Activated CD4-positive, alpha-beta T cell treated with anti-CD3 and anti-CD28 coated beads for 36 hours (primary cell): ENCODE measurements at regions of chr1 and their contacts with region 1.

Region 1: GRCh38 chr1:53485478-53486394 is 26.5 kb downstream of the DMRTB1 start:
- DNase-seq: peak; percentile 88
- ATAC-seq: peak; percentile 94
- H3K4me3 Mint-ChIP-seq: no peak overlapping the region
- H3K27ac Mint-ChIP-seq: no peak overlapping the region
- H3K4me1 Mint-ChIP-seq: peaks cover 3% of the 10 kb centered on the region
- H3K27me3 Mint-ChIP-seq: peaks cover 9% of the 10 kb centered on the region

Region 2: GRCh38 chr1:53326088-53326597 is 159.6 kb before region 1 on chr1:
- CTCF ChIA-PET with region 1: no interaction called
- POLR2A ChIA-PET with region 1: no interaction called
- intact Hi-C with region 1: no loop called
- DNase-seq: peak; percentile 98
- ATAC-seq: peak; percentile 89
- H3K4me3 Mint-ChIP-seq: peak overlapping the region; percentile 92
- H3K27ac Mint-ChIP-seq: peak overlapping the region; percentile 93
- H3K4me1 Mint-ChIP-seq: peaks cover 19% of the 10 kb centered on the region
- H3K27me3 Mint-ChIP-seq: no peaks in the 10 kb centered on the region

Region 3: DNA sequence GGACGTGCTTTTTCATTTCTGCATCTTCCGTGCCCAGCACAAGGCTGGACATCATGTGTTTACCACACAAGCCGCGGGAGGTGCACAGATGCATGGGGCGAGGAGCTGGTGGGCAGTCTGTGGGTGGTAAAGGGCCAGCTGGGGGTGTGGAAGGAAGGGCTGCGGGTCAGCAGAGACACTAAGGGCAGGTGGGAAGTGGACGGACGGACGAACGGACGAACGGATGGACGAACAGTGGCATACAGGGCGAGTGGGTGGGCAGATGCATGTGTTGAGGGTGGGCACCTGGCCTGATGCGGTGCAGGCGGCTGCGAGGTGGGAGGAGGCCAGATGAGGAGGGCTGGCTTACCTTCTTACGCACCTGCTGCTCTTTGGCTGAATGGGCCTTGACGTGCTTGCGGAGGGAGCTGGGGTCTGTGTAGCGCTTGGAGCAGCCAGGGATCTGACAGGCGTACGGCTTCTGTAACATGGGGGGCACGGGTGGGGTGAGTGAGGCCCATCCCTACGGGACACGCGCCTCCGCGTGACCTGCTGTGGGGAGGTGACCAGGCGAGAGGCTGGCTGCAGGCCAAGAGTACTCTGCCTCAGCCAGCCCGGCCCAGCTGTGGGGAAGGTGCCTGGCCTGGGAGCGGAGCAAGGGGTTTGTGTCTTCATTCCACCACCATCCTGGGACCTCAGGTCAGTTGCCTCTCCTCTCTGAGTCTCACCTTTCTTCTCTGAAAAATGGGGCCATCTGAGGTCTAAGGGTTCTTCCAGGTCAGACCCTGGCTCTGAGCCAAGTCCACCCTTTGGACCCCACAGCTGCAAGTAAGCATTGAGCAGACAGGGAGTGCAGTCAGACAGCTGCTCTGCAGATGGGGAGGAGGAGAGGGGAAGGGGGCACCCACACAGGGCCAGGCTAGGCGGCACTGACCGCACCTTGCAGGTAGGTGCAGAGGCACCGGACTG is 39.0 kb after region 1 on chr1:
- CTCF ChIA-PET with region 1: no interaction called
- POLR2A ChIA-PET with region 1: no interaction called
- intact Hi-C with region 1: no loop called
- DNase-seq: no peak
- ATAC-seq: no peak
- H3K4me3 Mint-ChIP-seq: no peak overlapping the region
- H3K27ac Mint-ChIP-seq: no peak overlapping the region
- H3K4me1 Mint-ChIP-seq: no peaks in the 10 kb centered on the region
- H3K27me3 Mint-ChIP-seq: no peaks in the 10 kb centered on the region

Region 4: GRCh38 chr1:53535846-53536245 is 50.1 kb after region 1 on chr1:
- CTCF ChIA-PET with region 1: no interaction called
- POLR2A ChIA-PET with region 1: no interaction called
- intact Hi-C with region 1: no loop called
- DNase-seq: no peak
- ATAC-seq: no peak
- H3K4me3 Mint-ChIP-seq: no peak overlapping the region
- H3K27ac Mint-ChIP-seq: no peak overlapping the region
- H3K4me1 Mint-ChIP-seq: no peaks in the 10 kb centered on the region
- H3K27me3 Mint-ChIP-seq: no peaks in the 10 kb centered on the region

Region 5: DNA sequence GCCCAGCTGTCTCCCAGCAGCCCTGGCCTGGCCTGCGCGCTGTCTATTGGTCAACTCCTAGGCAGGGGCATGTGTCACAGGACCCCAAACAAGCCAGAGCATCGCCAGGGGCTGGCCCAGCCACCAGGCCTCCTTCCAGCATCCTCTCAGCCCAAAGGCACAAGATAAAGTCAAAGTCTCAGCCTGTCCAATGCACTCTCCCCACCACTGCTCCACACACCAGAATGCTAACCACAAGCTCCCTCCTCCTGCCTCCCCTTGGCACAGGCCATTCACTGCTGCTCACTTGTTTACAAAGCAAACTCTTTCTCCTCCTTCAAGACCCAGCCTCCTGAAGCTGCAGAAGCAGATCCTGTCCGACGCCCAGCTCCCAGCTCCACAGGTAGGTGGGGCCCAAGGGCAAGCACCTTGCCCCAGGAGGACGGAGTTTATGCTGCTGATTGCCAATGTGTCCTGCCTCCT is 106.8 kb after region 1 on chr1:
- CTCF ChIA-PET with region 1: interaction called, 3 read pairs
- POLR2A ChIA-PET with region 1: no interaction called
- intact Hi-C with region 1: loop called (anchors 1 to 5 kb)
- DNase-seq: no peak
- ATAC-seq: no peak
- H3K4me3 Mint-ChIP-seq: no peak overlapping the region
- H3K27ac Mint-ChIP-seq: no peak overlapping the region
- H3K4me1 Mint-ChIP-seq: no peaks in the 10 kb centered on the region
- H3K27me3 Mint-ChIP-seq: no peaks in the 10 kb centered on the region

Region 6: DNA sequence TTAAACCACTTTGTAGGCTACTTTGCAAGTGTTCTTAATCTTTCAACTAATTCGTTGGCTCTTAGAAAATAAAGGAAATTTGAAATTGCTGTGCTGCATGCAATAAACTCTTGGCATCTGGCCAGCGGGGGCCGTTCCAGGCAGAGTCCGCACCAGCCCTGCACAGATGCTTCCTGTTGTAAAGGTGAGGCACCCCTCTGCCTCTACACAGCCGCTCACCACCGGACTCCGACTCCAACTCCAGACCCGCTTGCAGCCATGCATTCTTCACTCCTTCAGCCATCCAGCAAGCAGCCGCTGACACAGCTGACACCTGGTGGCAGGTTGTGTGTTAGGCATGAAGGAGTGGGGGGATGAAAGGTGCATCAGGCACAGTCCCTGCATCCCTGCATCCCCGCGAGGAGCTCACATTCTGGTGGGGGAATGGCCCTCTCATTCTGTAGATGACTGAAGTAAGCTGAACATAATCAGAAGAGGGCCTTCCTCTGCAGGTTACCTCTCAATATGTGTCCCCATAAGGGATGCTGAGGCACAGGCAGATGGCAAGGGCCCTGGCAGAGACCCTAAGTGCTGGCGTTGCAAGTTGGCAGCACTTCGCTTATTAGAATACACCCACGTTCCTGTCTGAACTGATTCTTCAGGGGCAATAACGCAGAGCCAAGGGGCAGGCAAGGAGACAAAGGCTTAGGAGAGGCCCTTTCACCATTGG is 196.4 kb after region 1 on chr1:
- CTCF ChIA-PET with region 1: interaction called, 5 read pairs
- POLR2A ChIA-PET with region 1: no interaction called
- intact Hi-C with region 1: loop called (anchors 1 kb)
- DNase-seq: peak; percentile 69
- ATAC-seq: peak; percentile 80
- H3K4me3 Mint-ChIP-seq: no peak overlapping the region
- H3K27ac Mint-ChIP-seq: no peak overlapping the region
- H3K4me1 Mint-ChIP-seq: peaks cover 5% of the 10 kb centered on the region
- H3K27me3 Mint-ChIP-seq: peaks cover 7% of the 10 kb centered on the region

Region 7: GRCh38 chr1:53754484-53755312 is 269.0 kb after region 1 on chr1:
- CTCF ChIA-PET with region 1: interaction called, 8 read pairs
- POLR2A ChIA-PET with region 1: no interaction called
- intact Hi-C with region 1: loop called (anchors 1 kb)
- DNase-seq: peak; percentile 41
- ATAC-seq: peak; percentile 51
- H3K4me3 Mint-ChIP-seq: no peak overlapping the region
- H3K27ac Mint-ChIP-seq: no peak overlapping the region
- H3K4me1 Mint-ChIP-seq: no peaks in the 10 kb centered on the region
- H3K27me3 Mint-ChIP-seq: no peaks in the 10 kb centered on the region

Region 8: GRCh38 chr1:54158071-54158470 is 672.3 kb after region 1 on chr1:
- CTCF ChIA-PET with region 1: no interaction called
- POLR2A ChIA-PET with region 1: no interaction called
- intact Hi-C with region 1: no loop called
- DNase-seq: no peak
- ATAC-seq: no peak
- H3K4me3 Mint-ChIP-seq: no peak overlapping the region
- H3K27ac Mint-ChIP-seq: no peak overlapping the region
- H3K4me1 Mint-ChIP-seq: no peaks in the 10 kb centered on the region
- H3K27me3 Mint-ChIP-seq: no peaks in the 10 kb centered on the region